ENCODE measurements at regions of chr6 and their contacts with region 1.

Region 1: GRCh38 chr6:157184202-157185020 is 138.9 kb downstream of the TMEM242 start:
- DNase-seq: peak; percentile 83
- ATAC-seq: peak; percentile 69

Region 2: DNA sequence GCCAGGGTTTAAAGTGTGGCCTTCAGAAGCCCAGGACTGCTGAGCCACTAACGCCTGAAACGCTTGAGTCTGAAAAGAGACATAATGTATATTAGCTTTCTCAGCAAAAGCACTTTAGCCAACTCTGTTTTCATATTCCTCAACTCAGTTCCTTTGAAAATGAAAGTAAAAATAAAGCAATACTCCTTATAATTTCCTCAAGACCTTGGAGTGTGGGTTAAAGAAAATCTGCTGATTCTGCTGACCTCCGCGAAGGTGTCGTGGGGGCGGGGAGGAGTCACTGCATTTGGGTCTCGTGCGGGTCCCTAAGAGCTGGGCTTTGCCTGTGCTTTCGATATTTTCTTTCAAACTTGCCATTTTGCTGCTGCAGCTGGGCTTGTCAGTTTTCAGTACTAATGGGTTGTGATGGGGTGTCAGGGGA is 549.5 kb before region 1 on chr6:
- intact Hi-C with region 1: no loop called
- DNase-seq: no peak
- ATAC-seq: no peak

Region 3: GRCh38 chr6:156886409-156886808 is 298.0 kb before region 1 on chr6:
- intact Hi-C with region 1: no loop called
- DNase-seq: no peak
- ATAC-seq: peak; percentile 61

Region 4: GRCh38 chr6:157034436-157035230 is 149.8 kb before region 1 on chr6:
- intact Hi-C with region 1: loop called (anchors 10 kb)
- DNase-seq: no peak
- ATAC-seq: peak; percentile 51